CD4-positive, alpha-beta T cell (primary cell): ENCODE measurements at regions of chr9 and their contacts with region 1.

Region 1: DNA sequence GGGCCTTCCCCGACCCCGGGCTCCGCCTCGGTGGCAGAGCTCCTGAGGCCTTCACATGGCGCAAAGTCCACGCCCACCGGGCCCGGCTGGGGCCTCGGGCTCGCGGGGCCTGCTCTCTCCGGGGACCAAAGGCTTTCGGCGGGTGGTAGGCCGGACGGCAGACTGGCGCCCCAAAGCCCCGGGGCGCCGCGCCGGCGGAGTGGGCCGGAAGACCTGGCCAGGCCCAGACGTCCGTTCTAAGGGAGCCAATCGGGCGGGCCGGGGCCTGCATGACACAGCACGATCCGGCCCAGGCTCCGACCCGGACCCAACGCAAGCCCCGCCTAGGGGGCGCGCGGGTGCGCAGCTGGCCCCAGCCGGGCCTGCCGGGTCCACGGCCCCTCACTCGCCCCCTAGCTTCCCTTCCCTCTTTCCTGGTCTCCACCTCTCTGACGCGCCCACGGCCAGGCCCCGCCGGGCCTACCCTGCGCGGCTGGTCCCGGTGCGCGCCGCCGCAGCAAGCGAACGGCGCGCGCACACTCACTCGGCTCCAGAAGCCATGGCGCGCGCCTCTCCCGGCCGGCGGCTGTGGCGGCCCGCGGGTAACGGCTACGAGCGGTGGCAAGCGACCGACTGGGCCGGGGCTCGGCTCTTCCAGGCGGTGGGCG is 488 bp downstream of the VCP start:
- DNase-seq: peak; percentile 42 to 87 (median 59)
- ATAC-seq: peak; percentile 45
- H3K4me3 ChIP-seq: peak overlapping the region; percentile 69
- H3K4me3 Mint-ChIP-seq: peak overlapping the region; percentile 85
- H3K27ac ChIP-seq: peak overlapping the region; percentile 92 to 96
- H3K27ac Mint-ChIP-seq: peak overlapping the region; percentile 87
- H3K4me1 ChIP-seq: peaks cover 42% of the 10 kb centered on the region
- H3K4me1 Mint-ChIP-seq: peaks cover 56% of the 10 kb centered on the region
- H3K27me3 ChIP-seq: no peaks in the 10 kb centered on the region
- H3K27me3 Mint-ChIP-seq: no peaks in the 10 kb centered on the region
- CTCF ChIP-seq: peak; percentile 35

Region 2: GRCh38 chr9:34522971-34523797 is 548.8 kb before region 1 on chr9 and contains the start of gene ENHO:
- CTCF ChIA-PET with region 1: no interaction called
- POLR2A ChIA-PET with region 1: no interaction called
- intact Hi-C with region 1: loop called in 1 of 2 experiments (anchors 10 kb)
- DNase-seq: peak; percentile 75 to 96 (median 90)
- ATAC-seq: peak; percentile 98
- H3K4me3 ChIP-seq: peak within 1 kb of the TSS; percentile 55
- H3K4me3 Mint-ChIP-seq: peak within 1 kb of the TSS; percentile 69
- H3K27ac ChIP-seq: no peak within 1 kb of the TSS
- H3K27ac Mint-ChIP-seq: no peak within 1 kb of the TSS
- H3K4me1 ChIP-seq: peaks cover 16% of the 10 kb centered on the region
- H3K4me1 Mint-ChIP-seq: peaks cover 12% of the 10 kb centered on the region
- H3K27me3 ChIP-seq: no peaks in the 10 kb centered on the region
- H3K27me3 Mint-ChIP-seq: no peaks in the 10 kb centered on the region
- CTCF ChIP-seq: no peak
- total RNA-seq, gene ENHO: 0.45 TPM in 1 of 2 experiments, not detected in the other

Region 3: DNA sequence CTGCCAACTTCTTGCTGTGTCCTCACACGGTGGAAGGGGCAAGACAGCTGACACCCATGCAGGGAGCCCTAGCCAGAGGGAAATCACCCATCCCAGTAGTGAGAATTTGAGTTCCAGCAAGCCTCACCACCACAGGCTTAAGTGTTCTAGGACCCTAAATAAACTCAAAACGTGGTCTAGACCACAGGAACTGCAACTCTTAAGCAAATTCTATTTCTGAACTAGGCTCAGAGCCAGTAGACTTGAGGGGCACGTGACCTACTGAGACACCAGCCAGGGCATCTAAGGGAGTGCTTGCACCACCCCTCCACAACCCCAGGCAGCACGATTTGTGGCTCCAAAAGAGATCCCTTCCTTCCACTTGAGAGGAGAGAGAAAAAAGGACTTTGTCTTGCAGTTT is 209.9 kb before region 1 on chr9:
- CTCF ChIA-PET with region 1: no interaction called
- POLR2A ChIA-PET with region 1: no interaction called
- intact Hi-C with region 1: no loop called
- DNase-seq: no peak
- ATAC-seq: no peak
- H3K4me3 ChIP-seq: no peak overlapping the region
- H3K4me3 Mint-ChIP-seq: no peak overlapping the region
- H3K27ac ChIP-seq: no peak overlapping the region
- H3K27ac Mint-ChIP-seq: no peak overlapping the region
- H3K4me1 ChIP-seq: no peaks in the 10 kb centered on the region
- H3K4me1 Mint-ChIP-seq: no peaks in the 10 kb centered on the region
- H3K27me3 ChIP-seq: peaks cover 10 to 27% of the 10 kb centered on the region in 2 experiments
- H3K27me3 Mint-ChIP-seq: peaks cover 62% of the 10 kb centered on the region
- CTCF ChIP-seq: no peak

Region 4: DNA sequence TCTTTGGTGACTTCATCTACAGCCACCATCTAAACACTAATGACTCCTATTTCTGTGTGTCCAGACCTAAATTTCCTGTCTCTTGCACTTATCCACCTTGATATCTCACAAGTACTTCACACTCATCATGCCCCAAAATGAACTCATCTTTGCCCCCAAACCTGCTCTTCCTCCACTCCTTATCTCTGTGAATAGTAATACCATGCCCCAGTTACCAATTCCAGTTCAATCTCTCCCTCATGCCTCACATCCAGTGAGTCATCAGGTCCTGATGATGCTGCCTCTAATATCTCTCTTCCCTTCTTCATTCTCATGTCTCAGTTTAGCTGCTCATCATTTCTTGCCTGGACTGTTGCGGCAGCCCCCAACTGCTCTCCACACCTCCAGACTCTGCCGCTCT is 97.3 kb before region 1 on chr9:
- CTCF ChIA-PET with region 1: no interaction called
- POLR2A ChIA-PET with region 1: no interaction called
- intact Hi-C with region 1: no loop called
- DNase-seq: no peak
- ATAC-seq: no peak
- H3K4me3 ChIP-seq: no peak overlapping the region
- H3K4me3 Mint-ChIP-seq: no peak overlapping the region
- H3K27ac ChIP-seq: no peak overlapping the region
- H3K27ac Mint-ChIP-seq: no peak overlapping the region
- H3K4me1 ChIP-seq: no peaks in the 10 kb centered on the region
- H3K4me1 Mint-ChIP-seq: no peaks in the 10 kb centered on the region
- H3K27me3 ChIP-seq: no peaks in the 10 kb centered on the region
- H3K27me3 Mint-ChIP-seq: no peaks in the 10 kb centered on the region
- CTCF ChIP-seq: no peak

Region 5: DNA sequence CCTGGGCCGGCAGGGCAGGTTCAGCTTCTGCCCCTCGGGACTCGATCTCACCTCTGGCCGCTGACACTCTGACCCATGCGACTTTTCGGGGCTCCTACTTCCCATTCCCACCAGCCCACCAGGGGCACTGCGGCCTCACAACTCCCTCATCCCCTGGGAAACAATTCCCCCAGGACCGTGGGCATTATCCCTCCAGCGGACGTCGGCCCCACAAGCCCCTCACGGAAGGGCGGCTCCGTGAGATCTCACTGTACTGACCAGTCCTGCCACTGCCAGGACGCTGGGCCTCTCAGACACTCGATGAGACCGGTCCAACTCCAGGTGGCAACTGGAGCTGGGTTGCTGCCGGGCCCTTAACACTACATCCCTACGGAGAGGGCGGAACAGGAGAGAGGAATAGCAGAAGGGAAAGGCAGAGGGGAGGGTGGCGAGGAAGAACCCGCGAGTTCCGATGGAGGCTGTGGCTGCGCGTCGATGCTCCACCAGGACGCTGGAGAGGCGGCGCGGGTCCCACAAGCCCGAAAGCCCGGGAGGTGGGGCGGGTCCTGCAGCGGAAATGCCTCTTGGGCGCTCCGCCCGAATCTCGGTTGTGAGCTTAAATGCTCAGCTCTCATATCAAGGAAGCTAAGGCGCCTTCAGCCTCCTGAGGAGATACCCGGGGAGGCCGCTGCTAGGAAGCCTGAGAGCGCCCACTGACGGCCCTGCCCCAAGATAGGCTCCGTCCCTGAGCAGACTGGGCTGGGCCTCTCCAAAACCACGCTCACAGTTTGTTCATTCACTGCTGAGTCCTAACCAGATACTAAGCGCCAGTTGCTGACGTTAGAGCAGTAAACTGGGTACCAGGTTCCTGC is 35.9 kb before region 1 on chr9:
- CTCF ChIA-PET with region 1: no interaction called
- POLR2A ChIA-PET with region 1: interaction called, 10 read pairs
- intact Hi-C with region 1: no loop called
- DNase-seq: peak; percentile 11 to 65 (median 40)
- ATAC-seq: peak; percentile 84
- H3K4me3 ChIP-seq: peak overlapping the region; percentile 42
- H3K4me3 Mint-ChIP-seq: peak overlapping the region; percentile 76
- H3K27ac ChIP-seq: no peak overlapping the region
- H3K27ac Mint-ChIP-seq: peak overlapping the region; percentile 76
- H3K4me1 ChIP-seq: peaks cover 10% of the 10 kb centered on the region
- H3K4me1 Mint-ChIP-seq: peaks cover 15% of the 10 kb centered on the region
- H3K27me3 ChIP-seq: no peaks in the 10 kb centered on the region
- H3K27me3 Mint-ChIP-seq: no peaks in the 10 kb centered on the region
- CTCF ChIP-seq: no peak

Region 6: GRCh38 chr9:35096035-35096849 is 24.3 kb after region 1 on chr9 and contains the start of gene PIGO:
- CTCF ChIA-PET with region 1: interaction called, 26 read pairs
- POLR2A ChIA-PET with region 1: interaction called, 51 read pairs
- intact Hi-C with region 1: loop called (anchors 1 kb)
- DNase-seq: peak; percentile 81 to 95 (median 88)
- ATAC-seq: peak; percentile 88
- H3K4me3 ChIP-seq: peak within 1 kb of the TSS; percentile 82
- H3K4me3 Mint-ChIP-seq: peak within 1 kb of the TSS; percentile 92
- H3K27ac ChIP-seq: peak within 1 kb of the TSS; percentile 96 to 99
- H3K27ac Mint-ChIP-seq: peak within 1 kb of the TSS; percentile 93
- H3K4me1 ChIP-seq: peaks cover 26% of the 10 kb centered on the region
- H3K4me1 Mint-ChIP-seq: peaks cover 43% of the 10 kb centered on the region
- H3K27me3 ChIP-seq: no peaks in the 10 kb centered on the region
- H3K27me3 Mint-ChIP-seq: no peaks in the 10 kb centered on the region
- CTCF ChIP-seq: peak; percentile 81
- total RNA-seq, gene PIGO: 17.5 to 18.9 TPM

Region 7: DNA sequence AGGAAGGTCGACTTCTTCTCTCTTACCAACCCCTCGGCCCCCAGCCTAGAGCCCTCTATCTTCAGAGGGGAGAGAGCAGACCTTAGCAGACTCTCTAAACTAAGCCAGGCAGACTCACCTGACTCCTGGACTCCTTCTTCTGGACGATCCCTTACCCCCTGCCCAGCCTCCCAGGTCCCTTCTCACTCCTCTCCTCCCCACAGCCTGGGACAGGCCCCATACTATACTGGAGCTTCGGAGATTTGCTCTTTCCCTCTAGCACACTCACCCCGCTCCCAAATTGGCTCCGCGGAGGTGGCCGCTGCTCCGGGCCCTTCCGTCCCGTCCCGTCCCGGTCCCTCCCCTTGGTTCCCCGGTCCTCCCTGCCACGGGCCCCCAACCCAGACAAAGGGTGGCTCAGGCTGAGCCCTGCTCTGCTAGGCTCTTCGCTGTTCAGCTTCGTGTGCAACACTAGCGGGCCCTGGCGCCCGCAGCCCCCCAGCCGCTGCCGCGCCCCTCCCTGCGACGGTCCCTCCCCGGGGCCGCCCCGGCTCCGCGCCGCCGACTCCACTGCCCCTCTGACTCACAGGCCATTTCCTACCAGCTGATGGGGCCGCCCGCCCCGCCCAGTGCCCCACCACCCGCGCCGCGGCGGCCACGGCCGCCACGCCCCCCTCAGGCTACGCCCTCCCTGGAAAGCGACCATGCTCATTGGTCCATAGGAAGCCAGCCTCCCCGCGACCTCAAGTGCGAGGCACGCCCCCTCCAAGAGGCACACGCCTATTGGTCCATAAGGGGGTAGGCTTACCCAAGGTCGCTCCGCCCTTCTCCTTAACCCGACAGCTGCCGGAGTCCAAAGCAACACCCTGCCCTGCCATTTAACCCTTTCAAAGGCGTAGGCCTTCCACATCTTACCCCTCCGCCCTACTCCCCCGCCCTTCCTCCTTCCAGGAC is 39.3 kb after region 1 on chr9:
- CTCF ChIA-PET with region 1: interaction called, 4 read pairs
- POLR2A ChIA-PET with region 1: interaction called, 25 read pairs
- intact Hi-C with region 1: loop called in 1 of 2 experiments (anchors 5 kb)
- DNase-seq: peak; percentile 92 to 98 (median 96)
- ATAC-seq: peak; percentile 80
- H3K4me3 ChIP-seq: peak overlapping the region; percentile 73
- H3K4me3 Mint-ChIP-seq: peak overlapping the region; percentile 93
- H3K27ac ChIP-seq: peak overlapping the region; percentile 70 to 74
- H3K27ac Mint-ChIP-seq: peak overlapping the region; percentile 84
- H3K4me1 ChIP-seq: peaks cover 54% of the 10 kb centered on the region
- H3K4me1 Mint-ChIP-seq: peaks cover 61% of the 10 kb centered on the region
- H3K27me3 ChIP-seq: no peaks in the 10 kb centered on the region
- H3K27me3 Mint-ChIP-seq: no peaks in the 10 kb centered on the region
- CTCF ChIP-seq: no peak